ENCODE measurements at regions of chr1 and their contacts with region 1.

Region 1: DNA sequence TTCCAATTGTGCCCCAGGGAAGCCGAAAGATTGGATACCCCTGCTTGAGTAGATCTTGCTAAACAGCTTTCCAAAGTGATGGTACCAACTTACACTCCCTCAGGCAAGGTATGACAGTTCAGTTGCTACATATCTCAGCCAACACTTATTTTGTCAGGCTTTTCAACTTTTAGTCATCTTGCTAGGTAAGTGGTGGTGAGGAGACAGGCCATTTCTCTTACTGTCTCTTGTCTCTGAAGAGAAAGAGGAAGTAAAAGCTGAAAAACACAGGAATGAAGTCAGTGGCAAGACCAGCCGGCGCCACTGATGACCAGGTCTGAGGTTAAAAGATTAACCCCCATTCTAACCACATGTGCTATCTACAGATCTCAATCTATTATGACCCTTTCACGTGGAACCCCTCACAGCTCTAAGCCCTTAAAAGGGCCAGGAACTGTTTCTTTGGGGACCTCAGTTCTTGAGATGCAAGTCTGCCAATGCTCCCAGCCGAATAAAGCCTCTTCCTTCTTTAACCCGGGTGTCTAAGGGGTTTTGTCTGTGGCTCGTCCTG is 4.2 kb downstream of the ADCY10 start:
- DNase-seq: no peak
- H3K4me3 Mint-ChIP-seq: no peak overlapping the region
- H3K27ac Mint-ChIP-seq: no peak overlapping the region
- H3K4me1 Mint-ChIP-seq: peaks cover 12% of the 10 kb centered on the region
- H3K27me3 Mint-ChIP-seq: no peaks in the 10 kb centered on the region
- CTCF ChIP-seq: no peak

Region 2: GRCh38 chr1:167617153-167618147 is 292.3 kb before region 1 on chr1:
- CTCF ChIA-PET with region 1: no interaction called
- POLR2A ChIA-PET with region 1: no interaction called
- intact Hi-C with region 1: no loop called
- DNase-seq: no peak
- H3K4me3 Mint-ChIP-seq: peak overlapping the region; percentile 0
- H3K27ac Mint-ChIP-seq: peak overlapping the region; percentile 16
- H3K4me1 Mint-ChIP-seq: peaks cover 32% of the 10 kb centered on the region
- H3K27me3 Mint-ChIP-seq: no peaks in the 10 kb centered on the region
- CTCF ChIP-seq: no peak

Region 3: GRCh38 chr1:167922023-167922422 is 12.3 kb after region 1 on chr1:
- CTCF ChIA-PET with region 1: interaction called, 3 read pairs
- POLR2A ChIA-PET with region 1: interaction called, 14 read pairs
- intact Hi-C with region 1: no loop called
- DNase-seq: no peak
- H3K4me3 Mint-ChIP-seq: peak overlapping the region; percentile 9
- H3K27ac Mint-ChIP-seq: peak overlapping the region; percentile 80
- H3K4me1 Mint-ChIP-seq: peaks cover 19% of the 10 kb centered on the region
- H3K27me3 Mint-ChIP-seq: no peaks in the 10 kb centered on the region
- CTCF ChIP-seq: no peak